ENCODE measurements at regions of chr2 and their contacts with region 1.

Region 1: GRCh38 chr2:60550178-60550983 is 3.1 kb downstream of the BCL11A start:
- DNase-seq: peak; percentile 68
- ATAC-seq: peak; percentile 56
- H3K4me3 Mint-ChIP-seq: peak overlapping the region; percentile 96
- H3K27ac Mint-ChIP-seq: peak overlapping the region; percentile 98
- H3K4me1 Mint-ChIP-seq: peaks cover 41% of the 10 kb centered on the region
- H3K27me3 Mint-ChIP-seq: no peaks in the 10 kb centered on the region
- CTCF ChIP-seq: peak; percentile 32

Region 2: GRCh38 chr2:59449269-59449668 is 1101.1 kb before region 1 on chr2:
- CTCF ChIA-PET with region 1: interaction called, 22 read pairs
- POLR2A ChIA-PET with region 1: interaction called, 9 read pairs
- intact Hi-C with region 1: loop called (anchors 1 kb)
- DNase-seq: no peak
- ATAC-seq: peak; percentile 77
- H3K4me3 Mint-ChIP-seq: no peak overlapping the region
- H3K27ac Mint-ChIP-seq: no peak overlapping the region
- H3K4me1 Mint-ChIP-seq: no peaks in the 10 kb centered on the region
- H3K27me3 Mint-ChIP-seq: no peaks in the 10 kb centered on the region
- CTCF ChIP-seq: no peak

Region 3: GRCh38 chr2:59575191-59575590 is 975.2 kb before region 1 on chr2:
- CTCF ChIA-PET with region 1: no interaction called
- POLR2A ChIA-PET with region 1: no interaction called
- intact Hi-C with region 1: no loop called
- DNase-seq: no peak
- ATAC-seq: no peak
- H3K4me3 Mint-ChIP-seq: no peak overlapping the region
- H3K27ac Mint-ChIP-seq: no peak overlapping the region
- H3K4me1 Mint-ChIP-seq: peaks cover 9% of the 10 kb centered on the region
- H3K27me3 Mint-ChIP-seq: no peaks in the 10 kb centered on the region
- CTCF ChIP-seq: no peak

Region 4: GRCh38 chr2:59732871-59733566 is 817.4 kb before region 1 on chr2:
- CTCF ChIA-PET with region 1: no interaction called
- POLR2A ChIA-PET with region 1: no interaction called
- intact Hi-C with region 1: no loop called
- DNase-seq: no peak
- ATAC-seq: peak; percentile 47
- H3K4me3 Mint-ChIP-seq: no peak overlapping the region
- H3K27ac Mint-ChIP-seq: no peak overlapping the region
- H3K4me1 Mint-ChIP-seq: no peaks in the 10 kb centered on the region
- H3K27me3 Mint-ChIP-seq: no peaks in the 10 kb centered on the region
- CTCF ChIP-seq: no peak

Region 5: DNA sequence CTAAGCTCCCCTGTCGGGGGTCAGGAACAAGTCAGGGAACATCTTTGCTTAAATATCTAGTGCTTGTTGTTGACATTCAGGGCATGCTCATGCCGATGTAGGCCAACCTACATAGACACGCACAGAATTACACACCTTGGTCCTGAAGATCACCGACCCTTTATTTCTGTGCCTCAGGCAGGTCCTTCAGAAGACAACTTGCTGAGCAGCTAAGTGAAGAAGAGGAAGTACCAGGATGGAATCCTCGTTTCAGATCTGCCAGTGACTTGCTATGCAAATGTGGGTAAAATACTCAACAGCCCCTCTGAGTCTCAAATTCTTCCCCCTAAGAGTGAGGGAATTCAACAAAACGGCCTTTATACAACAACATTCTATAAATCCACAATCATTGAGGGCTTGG is 491.6 kb before region 1 on chr2:
- CTCF ChIA-PET with region 1: no interaction called
- POLR2A ChIA-PET with region 1: interaction called, 3 read pairs
- intact Hi-C with region 1: loop called (anchors 2 kb)
- DNase-seq: peak; percentile 18
- ATAC-seq: peak; percentile 90
- H3K4me3 Mint-ChIP-seq: peak overlapping the region; percentile 33
- H3K27ac Mint-ChIP-seq: peak overlapping the region; percentile 61
- H3K4me1 Mint-ChIP-seq: peaks cover 26% of the 10 kb centered on the region
- H3K27me3 Mint-ChIP-seq: no peaks in the 10 kb centered on the region
- CTCF ChIP-seq: no peak

Region 6: GRCh38 chr2:60366135-60366712 is 184.2 kb before region 1 on chr2:
- CTCF ChIA-PET with region 1: interaction called, 4 read pairs
- POLR2A ChIA-PET with region 1: interaction called, 27 read pairs
- intact Hi-C with region 1: no loop called
- DNase-seq: no peak
- ATAC-seq: peak; percentile 60
- H3K4me3 Mint-ChIP-seq: peak overlapping the region; percentile 62
- H3K27ac Mint-ChIP-seq: peak overlapping the region; percentile 95
- H3K4me1 Mint-ChIP-seq: peaks cover 99% of the 10 kb centered on the region
- H3K27me3 Mint-ChIP-seq: no peaks in the 10 kb centered on the region
- CTCF ChIP-seq: no peak

Region 7: GRCh38 chr2:60492548-60492947 is 57.8 kb before region 1 on chr2:
- CTCF ChIA-PET with region 1: interaction called, 4 read pairs
- POLR2A ChIA-PET with region 1: interaction called, 44 read pairs
- intact Hi-C with region 1: no loop called
- DNase-seq: no peak
- ATAC-seq: peak; percentile 83
- H3K4me3 Mint-ChIP-seq: peak overlapping the region; percentile 62
- H3K27ac Mint-ChIP-seq: peak overlapping the region; percentile 78
- H3K4me1 Mint-ChIP-seq: peaks cover 97% of the 10 kb centered on the region
- H3K27me3 Mint-ChIP-seq: no peaks in the 10 kb centered on the region
- CTCF ChIP-seq: no peak

Region 8: DNA sequence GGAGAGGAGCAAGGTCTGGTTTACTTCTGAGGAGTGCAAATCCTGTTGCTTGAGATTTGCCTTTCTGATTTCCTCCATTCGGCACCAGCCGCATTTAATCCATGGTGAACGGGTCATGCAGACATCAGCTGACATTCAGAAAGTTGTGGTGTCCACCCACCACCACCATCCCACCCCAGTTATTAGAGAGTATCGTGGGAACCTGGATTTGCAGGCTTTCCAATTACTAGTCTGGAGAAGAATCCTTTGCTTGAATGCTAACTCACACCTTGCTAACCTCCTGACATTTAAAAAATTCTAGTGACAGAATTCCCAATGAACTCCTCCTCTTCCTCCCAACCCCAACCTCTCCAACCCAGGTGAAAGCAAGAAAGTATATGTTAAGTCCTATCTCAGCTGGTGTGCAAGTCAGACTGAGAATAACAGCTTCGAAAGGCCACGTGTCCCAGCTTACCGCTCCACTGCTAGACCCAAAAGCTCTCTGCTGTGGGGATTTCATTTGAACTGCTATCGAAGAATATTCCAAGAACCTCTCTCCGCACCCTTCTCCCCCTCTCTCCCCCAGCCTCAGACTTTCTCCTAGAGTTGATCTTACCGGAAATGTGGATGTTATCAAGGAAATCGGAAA is 14.6 kb before region 1 on chr2:
- CTCF ChIA-PET with region 1: interaction called, 15 read pairs
- POLR2A ChIA-PET with region 1: interaction called, 54 read pairs
- intact Hi-C with region 1: loop called (anchors 1 kb)
- DNase-seq: peak; percentile 17
- ATAC-seq: peak; percentile 74
- H3K4me3 Mint-ChIP-seq: peak overlapping the region; percentile 67
- H3K27ac Mint-ChIP-seq: peak overlapping the region; percentile 85
- H3K4me1 Mint-ChIP-seq: peaks cover 94% of the 10 kb centered on the region
- H3K27me3 Mint-ChIP-seq: no peaks in the 10 kb centered on the region
- CTCF ChIP-seq: no peak